Mammary epithelial cell (primary cell): ENCODE measurements at regions of chr21 and their contacts with region 1.

Region 1: GRCh38 chr21:41933313-41934086 is 20.3 kb downstream of the C2CD2 start:
- DNase-seq: peak; percentile 54
- H3K4me3 ChIP-seq: peak overlapping the region; percentile 29 to 43 (median 42)
- H3K27ac ChIP-seq: peak overlapping the region; percentile 89
- H3K4me1 ChIP-seq: peaks cover 54% of the 10 kb centered on the region
- H3K27me3 ChIP-seq: no peaks in the 10 kb centered on the region
- CTCF ChIP-seq: peak; percentile 45 to 66

Region 2: DNA sequence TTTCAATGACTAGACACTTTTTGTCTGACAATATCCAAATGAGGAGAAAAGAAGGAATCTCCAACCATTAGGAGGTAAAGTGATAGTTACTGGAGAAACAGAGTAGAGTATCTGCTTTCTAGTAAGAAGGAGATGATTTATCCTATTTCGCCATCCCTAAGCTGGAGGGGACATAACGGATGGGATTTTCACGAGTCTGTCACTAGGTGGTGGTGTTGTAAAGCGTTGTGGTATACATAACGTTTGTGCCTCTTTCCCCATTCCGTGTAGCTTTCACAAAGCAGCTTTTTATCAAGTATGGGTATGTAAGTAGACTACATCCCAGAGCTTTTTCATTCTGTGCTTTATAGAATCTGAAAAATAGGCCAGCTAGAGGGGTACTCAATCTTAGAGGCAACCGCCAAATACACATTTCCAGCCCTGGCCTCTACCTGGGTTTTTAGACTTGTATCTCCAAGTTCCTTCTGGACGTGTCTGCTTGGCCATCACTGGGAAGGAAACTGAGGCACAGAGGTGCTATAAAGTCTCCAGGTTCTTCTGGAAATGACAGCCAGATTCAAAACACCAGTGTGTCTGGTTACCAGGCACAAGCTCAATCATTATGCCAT is 650.2 kb before region 1 on chr21:
- CTCF ChIA-PET with region 1: no interaction called
- dilution Hi-C with region 1: no loop called
- in situ Hi-C with region 1: no loop called
- intact Hi-C with region 1: loop called (anchors 2 kb)
- DNase-seq: peak; percentile 69
- H3K4me3 ChIP-seq: no peak overlapping the region
- H3K27ac ChIP-seq: no peak overlapping the region
- H3K4me1 ChIP-seq: no peaks in the 10 kb centered on the region
- H3K27me3 ChIP-seq: no peaks in the 10 kb centered on the region
- CTCF ChIP-seq: peak; percentile 82 to 83

Region 3: DNA sequence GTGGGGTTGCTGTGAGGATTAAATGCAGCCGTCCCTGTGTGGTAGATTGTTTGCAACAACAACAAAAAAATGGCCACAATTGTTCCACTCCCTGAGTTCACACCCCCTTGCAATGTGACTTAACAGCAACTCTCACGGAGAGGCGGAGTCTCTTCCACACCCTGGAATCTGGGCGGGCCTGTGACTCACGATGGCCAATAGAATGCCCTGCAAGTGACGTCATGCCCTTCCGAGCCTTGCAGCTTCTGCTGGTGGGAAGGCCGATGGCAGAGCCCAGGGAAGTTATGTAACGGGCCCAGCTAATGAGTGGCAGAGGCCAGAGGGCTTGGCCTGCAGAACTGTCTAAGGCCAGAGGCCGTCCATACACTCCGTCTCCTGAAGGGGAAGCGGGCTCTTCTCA is 254.6 kb before region 1 on chr21:
- CTCF ChIA-PET with region 1: no interaction called
- dilution Hi-C with region 1: no loop called
- in situ Hi-C with region 1: no loop called
- intact Hi-C with region 1: loop called (anchors 1 kb)
- DNase-seq: peak; percentile 99
- H3K4me3 ChIP-seq: peak overlapping the region in 2 of 3 experiments; percentile 37 to 40
- H3K27ac ChIP-seq: peak overlapping the region; percentile 94
- H3K4me1 ChIP-seq: peaks cover 61% of the 10 kb centered on the region
- H3K27me3 ChIP-seq: no peaks in the 10 kb centered on the region
- CTCF ChIP-seq: no peak

Region 4: DNA sequence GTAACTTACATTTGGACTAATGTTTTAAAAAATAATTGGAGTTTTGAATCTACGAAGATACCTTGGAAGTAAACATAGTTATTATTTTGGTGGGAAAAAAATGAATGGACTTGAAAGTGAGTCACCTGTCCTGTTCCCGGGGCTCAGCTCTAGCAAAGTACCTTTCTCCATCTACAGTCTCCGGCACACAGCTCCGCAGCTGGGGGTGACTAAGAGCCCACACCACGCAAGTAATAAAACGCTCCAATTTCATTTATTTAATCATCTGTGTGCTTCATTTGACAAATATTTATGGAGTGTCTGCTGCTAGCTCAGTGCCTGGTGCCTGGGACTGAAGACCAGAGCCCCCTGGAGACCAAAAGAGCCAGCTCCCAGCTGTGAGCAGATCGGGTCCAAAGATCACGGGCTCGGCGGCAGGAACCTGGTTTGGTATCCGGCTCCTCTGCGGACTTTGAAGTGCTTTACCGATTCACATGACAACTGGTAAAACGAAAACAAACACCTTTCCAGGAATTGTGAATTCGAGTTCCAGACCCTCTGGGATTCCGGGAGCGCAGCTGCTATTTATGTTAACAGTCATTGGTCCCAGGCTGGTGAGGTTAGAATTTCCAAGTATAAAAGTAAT is 165.0 kb before region 1 on chr21:
- CTCF ChIA-PET with region 1: no interaction called
- dilution Hi-C with region 1: no loop called
- in situ Hi-C with region 1: no loop called
- intact Hi-C with region 1: loop called (anchors 5 kb)
- DNase-seq: peak; percentile 87
- H3K4me3 ChIP-seq: peak overlapping the region; percentile 87 to 94 (median 92)
- H3K27ac ChIP-seq: peak overlapping the region; percentile 95
- H3K4me1 ChIP-seq: peaks cover 28% of the 10 kb centered on the region
- H3K27me3 ChIP-seq: no peaks in the 10 kb centered on the region
- CTCF ChIP-seq: peak; percentile 24 to 47

Region 5: DNA sequence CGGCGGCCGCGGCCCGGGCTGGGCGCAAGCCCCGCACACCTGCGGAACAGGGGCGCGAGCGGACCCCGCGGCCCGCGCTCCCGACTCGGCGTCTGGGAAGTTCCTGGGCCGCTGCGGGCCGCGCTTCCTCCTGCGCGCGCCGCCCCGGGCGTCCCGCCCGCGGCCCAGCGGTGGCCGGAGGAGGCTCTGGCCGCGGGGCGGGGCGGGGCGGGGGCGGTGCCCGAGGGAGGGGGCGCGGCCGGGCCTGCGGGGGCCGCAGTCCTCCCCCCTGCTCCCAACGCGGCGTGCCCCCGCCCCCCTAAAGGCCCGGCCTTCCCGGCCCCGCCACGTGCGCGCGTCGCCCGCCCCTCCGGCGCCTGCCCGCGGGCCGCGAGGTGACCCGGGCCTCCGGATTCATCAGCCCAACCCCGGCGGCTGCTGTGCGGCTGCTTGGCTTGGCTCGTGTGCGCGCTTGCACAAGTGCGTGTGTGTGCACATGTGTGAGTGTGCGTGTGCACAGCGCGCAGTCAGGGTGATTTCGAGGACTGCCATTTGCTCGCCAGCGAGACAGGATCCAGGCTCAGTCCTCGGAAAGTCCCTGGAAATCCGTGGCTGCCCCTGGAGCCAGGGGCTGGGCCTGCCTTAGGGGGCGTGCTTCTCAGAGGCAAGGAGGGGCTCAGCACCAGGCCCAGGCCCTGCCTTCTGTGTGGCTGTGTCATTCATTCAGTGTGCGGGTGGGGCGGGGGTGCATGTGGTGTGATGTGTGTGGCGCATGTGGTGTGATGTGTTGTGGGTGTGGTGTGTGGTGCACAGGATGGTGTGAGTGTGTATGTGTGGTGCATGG is 20.5 kb after region 1 on chr21 and contains the start of gene C2CD2:
- CTCF ChIA-PET with region 1: interaction called, 3 read pairs
- dilution Hi-C with region 1: no loop called
- in situ Hi-C with region 1: no loop called
- intact Hi-C with region 1: loop called (anchors 2 kb)
- DNase-seq: peak; percentile 50
- H3K4me3 ChIP-seq: peak within 1 kb of the TSS; percentile 63 to 81 (median 76)
- H3K27ac ChIP-seq: peak within 1 kb of the TSS; percentile 51
- H3K4me1 ChIP-seq: peaks cover 46% of the 10 kb centered on the region
- H3K27me3 ChIP-seq: no peaks in the 10 kb centered on the region
- CTCF ChIP-seq: no peak
- total RNA-seq, gene C2CD2: 29.1 to 36.7 TPM

Region 6: DNA sequence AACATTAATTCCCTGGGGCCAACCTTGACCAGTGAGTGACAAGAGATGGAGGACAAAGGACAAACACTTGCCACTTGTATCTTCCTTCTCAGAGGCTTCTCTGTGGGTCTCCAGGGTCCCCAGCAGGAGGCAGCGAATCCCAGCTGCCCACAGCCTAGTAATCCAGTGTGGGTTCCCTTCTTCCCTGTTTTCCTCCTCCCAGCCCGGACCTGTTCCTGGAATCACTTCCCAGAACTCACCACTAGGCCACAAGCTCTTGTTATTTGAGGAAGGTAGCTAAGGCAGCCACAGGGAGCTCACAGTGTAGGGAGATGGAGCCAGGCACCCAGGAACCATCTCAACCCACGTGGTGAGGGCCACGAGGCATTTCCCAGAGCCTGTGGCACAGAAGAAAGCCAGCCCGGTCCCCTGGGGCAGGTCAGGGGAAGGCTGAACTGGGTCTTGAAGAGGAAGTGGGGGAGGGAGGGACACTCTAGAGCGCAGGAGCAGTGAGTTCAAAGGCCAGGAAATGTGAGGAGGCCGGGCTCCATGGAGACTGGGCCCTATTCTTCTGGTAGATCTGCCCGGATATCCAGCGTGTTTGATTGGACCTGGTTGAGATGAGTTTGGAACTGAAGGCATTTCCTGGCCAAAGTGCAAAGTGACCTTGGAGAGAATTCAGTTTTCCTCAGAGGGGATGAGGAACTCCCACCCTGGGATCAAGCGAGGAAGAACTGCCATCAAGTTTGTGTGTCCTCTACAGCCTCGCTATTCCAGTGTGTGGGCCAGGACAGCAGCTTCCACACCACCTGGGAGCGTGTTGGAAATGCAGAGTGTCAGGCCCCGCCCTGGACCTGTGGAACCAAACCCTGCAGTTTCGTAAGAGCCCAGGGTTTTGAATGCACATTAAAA is 40.6 kb after region 1 on chr21:
- CTCF ChIA-PET with region 1: no interaction called
- dilution Hi-C with region 1: no loop called
- in situ Hi-C with region 1: no loop called
- intact Hi-C with region 1: no loop called
- DNase-seq: no peak
- H3K4me3 ChIP-seq: no peak overlapping the region
- H3K27ac ChIP-seq: no peak overlapping the region
- H3K4me1 ChIP-seq: peaks cover 6% of the 10 kb centered on the region
- H3K27me3 ChIP-seq: no peaks in the 10 kb centered on the region
- CTCF ChIP-seq: peak; percentile 16 to 21

Region 7: GRCh38 chr21:42117229-42117966 is 183.9 kb after region 1 on chr21:
- CTCF ChIA-PET with region 1: interaction called, 3 read pairs
- dilution Hi-C with region 1: no loop called
- in situ Hi-C with region 1: loop called in 1 of 2 experiments (anchors 10 kb)
- intact Hi-C with region 1: loop called (anchors 1 kb)
- DNase-seq: peak; percentile 48
- H3K4me3 ChIP-seq: no peak overlapping the region
- H3K27ac ChIP-seq: no peak overlapping the region
- H3K4me1 ChIP-seq: peaks cover 13% of the 10 kb centered on the region
- H3K27me3 ChIP-seq: no peaks in the 10 kb centered on the region
- CTCF ChIP-seq: peak; percentile 91 to 94

Region 8: DNA sequence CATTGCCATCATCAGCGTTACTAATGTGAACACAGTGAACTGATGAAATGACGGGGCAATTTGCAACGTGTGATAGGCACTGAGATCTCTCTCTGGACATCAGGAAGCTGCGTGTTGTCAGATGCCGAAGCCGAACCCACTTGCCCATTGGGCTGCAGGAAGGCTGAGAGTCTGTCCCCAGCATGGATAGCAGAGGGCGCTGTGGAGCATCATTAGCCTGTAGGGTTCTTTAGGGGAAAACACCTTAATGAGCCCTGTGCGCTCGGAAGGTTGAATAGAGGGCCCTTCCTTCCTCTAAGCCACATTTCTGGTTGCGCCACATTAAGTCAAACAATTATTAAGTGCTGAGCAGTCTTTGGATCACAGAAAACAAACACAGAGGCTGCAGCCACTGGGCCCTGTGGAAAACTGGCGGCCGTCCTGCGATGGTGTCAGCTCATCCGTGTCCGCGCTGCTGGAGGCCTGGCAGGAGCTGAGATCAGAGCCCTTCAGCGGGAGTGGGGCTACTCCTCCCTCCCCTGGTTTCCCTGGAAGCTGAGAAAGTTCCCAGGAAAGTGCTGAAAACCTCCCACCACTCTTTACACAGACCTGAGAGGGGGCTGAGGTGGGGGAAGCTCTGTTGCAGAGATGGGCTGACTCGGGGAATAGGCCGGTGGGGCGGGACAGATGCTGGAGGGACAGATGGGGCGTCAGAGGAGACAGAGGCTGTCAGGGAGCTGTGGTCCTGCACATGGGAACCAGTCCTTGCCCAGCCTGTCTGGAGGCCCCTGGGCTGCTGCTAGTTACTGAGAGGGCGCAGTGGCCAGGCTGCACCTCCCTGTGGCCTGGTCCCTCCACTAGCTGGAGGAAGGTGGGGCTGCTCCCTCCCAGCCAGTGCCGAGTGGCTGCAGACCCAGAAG is 404.6 kb after region 1 on chr21:
- CTCF ChIA-PET with region 1: no interaction called
- dilution Hi-C with region 1: no loop called
- in situ Hi-C with region 1: no loop called
- intact Hi-C with region 1: no loop called
- DNase-seq: no peak
- H3K4me3 ChIP-seq: no peak overlapping the region
- H3K27ac ChIP-seq: no peak overlapping the region
- H3K4me1 ChIP-seq: no peaks in the 10 kb centered on the region
- H3K27me3 ChIP-seq: no peaks in the 10 kb centered on the region
- CTCF ChIP-seq: peak; percentile 6 to 32

Region 9: DNA sequence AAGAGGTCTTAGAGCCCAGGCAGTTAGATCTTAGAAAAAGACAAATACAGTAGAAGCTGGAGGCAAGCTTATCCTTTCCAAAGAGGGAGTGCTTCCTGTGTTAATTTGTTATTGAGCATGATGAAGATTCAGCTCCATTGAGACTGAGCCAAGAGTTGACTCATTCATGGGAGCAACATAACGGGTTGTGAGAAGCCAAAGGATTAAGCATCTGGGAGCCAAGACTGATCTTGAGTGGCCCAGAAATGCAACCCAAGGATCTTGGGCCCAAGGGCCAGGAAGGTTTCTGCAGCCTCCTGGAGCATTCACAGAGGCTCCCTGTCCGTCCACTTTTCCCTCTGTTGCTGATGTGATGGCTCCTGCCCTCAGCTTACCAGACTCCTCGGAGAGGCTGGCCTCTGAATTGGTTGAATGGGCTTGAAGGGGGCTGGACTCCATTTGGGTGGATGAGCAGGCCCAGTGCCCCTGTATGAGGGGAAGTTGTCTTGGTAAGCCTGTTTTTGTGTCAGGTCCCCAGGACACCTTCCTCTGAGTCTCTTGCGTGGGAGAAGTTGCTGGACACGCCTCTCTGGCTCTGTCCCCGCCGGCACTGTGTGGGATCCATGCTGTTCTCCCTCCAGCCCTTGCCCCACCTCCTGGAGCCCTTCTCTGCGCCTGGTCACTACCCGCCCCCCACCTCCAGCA is 762.3 kb after region 1 on chr21:
- CTCF ChIA-PET with region 1: no interaction called
- dilution Hi-C with region 1: no loop called
- in situ Hi-C with region 1: no loop called
- intact Hi-C with region 1: no loop called
- DNase-seq: peak; percentile 43
- H3K4me3 ChIP-seq: no peak overlapping the region
- H3K27ac ChIP-seq: no peak overlapping the region
- H3K4me1 ChIP-seq: no peaks in the 10 kb centered on the region
- H3K27me3 ChIP-seq: no peaks in the 10 kb centered on the region
- CTCF ChIP-seq: no peak